ENCODE measurements at regions of chrX and their contacts with region 1.

Region 1: GRCh38 chrX:48021026-48021900 is 14.5 kb downstream of the SPACA5 start:
- DNase-seq: peak; percentile 84
- ATAC-seq: peak; percentile 87 to 92

Region 2: GRCh38 chrX:47650164-47651042 is 370.9 kb before region 1 on chrX and contains the start of gene ELK1:
- intact Hi-C with region 1: loop called in 1 of 2 experiments (anchors 10 kb)
- DNase-seq: peak; percentile 95
- ATAC-seq: peak; percentile 94 to 98
- total RNA-seq, gene ELK1: 18.5 to 32.2 TPM

Region 3: GRCh38 chrX:47836164-47837072 is 184.8 kb before region 1 on chrX and contains the start of gene ZNF81:
- intact Hi-C with region 1: loop called in 1 of 2 experiments (anchors 5 kb)
- DNase-seq: peak; percentile 96
- ATAC-seq: peak; percentile 99 to 100
- total RNA-seq, gene ZNF81: 7.0 to 7.6 TPM

Region 4: GRCh38 chrX:47854474-47854873 is 166.8 kb before region 1 on chrX:
- intact Hi-C with region 1: loop called (anchors 5 to 10 kb)
- DNase-seq: peak; percentile 34
- ATAC-seq: peak in 1 of 2 donors; percentile 67